ENCODE measurements at regions of chr14 and their contacts with region 1.

Region 1: DNA sequence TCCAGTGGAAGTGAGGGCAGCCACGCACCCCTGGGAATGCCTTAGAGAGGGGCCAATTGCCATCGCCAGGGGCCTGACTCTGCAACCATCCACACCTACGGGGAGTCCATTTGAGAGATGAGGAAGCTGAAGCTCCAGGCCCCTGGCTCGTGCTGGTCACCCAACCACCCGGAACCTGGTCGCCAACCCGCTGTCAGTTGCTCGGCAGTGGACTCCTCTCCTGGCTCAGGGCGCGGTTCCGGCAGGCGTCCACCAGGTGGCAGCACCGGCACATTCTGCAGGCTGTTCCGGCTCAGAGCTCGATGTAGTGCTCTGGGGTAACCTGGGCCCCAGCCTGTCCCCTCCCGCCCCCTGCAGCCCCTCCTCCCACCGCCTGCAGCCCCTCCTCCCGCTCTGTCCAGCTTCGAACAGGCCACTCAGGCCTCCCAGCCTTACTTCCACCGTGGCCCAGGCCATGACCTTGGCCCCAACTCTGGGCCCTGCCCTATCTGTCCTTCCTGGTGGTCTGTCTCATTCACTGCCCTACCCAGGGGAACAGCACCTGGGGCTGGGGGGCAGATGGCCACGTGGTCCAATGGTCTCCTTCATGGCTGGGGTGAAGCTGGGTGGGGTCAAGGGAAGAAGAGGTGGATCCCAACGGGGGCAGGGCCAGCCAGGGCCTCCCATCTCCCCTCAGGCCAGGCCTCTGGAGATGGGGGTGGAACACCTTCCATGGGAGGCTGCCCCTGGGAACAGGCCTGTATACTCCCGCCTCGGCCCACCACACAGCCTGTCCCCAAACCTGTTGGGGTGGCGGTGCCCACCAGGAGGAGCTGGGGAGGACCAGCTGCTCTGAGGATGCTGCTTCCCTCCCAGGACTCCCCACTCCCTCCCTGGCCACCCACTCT is 15.7 kb downstream of the SIVA1 start:
- DNase-seq: peak; percentile 86
- H3K4me3 Mint-ChIP-seq: no peak overlapping the region
- H3K27ac Mint-ChIP-seq: no peak overlapping the region
- H3K4me1 Mint-ChIP-seq: no peaks in the 10 kb centered on the region
- H3K27me3 Mint-ChIP-seq: no peaks in the 10 kb centered on the region

Region 2: DNA sequence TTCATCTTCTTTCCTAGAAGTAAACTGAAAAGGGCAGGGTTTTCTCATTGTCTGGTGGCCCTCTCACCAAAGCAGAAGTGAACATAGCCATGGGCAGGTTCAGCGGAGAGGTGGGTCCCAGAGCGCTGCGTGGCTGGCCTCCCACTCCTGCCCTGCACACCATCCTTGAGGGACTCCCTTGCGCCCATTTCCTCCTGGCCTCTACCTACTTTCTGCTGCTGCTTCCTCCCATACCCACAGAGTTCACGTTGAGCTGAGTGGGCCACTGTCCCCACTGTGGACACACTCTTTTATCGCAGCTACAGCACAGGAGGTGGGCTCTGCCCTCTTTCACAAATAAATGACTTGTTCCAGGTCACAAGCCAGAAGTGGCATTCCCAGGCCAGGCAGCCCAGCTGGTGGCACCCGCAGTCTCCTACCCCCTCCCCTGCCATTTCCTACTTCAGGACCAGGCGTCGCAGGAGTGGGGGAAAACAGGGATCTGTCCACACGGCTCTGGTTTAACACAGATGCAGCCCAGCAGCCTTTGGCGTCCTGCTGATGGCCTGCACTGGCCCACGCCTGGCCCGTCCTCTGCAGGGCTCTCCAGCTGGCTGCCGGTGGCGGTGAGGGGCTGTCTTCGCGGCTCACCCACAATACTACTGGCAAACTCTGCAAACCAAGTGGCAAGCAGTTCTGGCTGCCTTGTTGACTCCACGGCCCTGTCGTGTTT is 10.8 kb before region 1 on chr14:
- intact Hi-C with region 1: no loop called
- DNase-seq: no peak
- H3K4me3 Mint-ChIP-seq: no peak overlapping the region
- H3K27ac Mint-ChIP-seq: no peak overlapping the region
- H3K4me1 Mint-ChIP-seq: peaks cover 21% of the 10 kb centered on the region
- H3K27me3 Mint-ChIP-seq: no peaks in the 10 kb centered on the region

Region 3: GRCh38 chr14:104800015-104800770 is 31.5 kb after region 1 on chr14:
- intact Hi-C with region 1: loop called (anchors 1 kb)
- DNase-seq: peak; percentile 77
- H3K4me3 Mint-ChIP-seq: peak overlapping the region; percentile 61
- H3K27ac Mint-ChIP-seq: peak overlapping the region; percentile 66
- H3K4me1 Mint-ChIP-seq: peaks cover 16% of the 10 kb centered on the region
- H3K27me3 Mint-ChIP-seq: peaks cover 10% of the 10 kb centered on the region

Region 4: GRCh38 chr14:104865644-104866441 is 97.2 kb after region 1 on chr14:
- intact Hi-C with region 1: loop called (anchors 5 kb)
- DNase-seq: no peak
- H3K4me3 Mint-ChIP-seq: peak overlapping the region; percentile 70
- H3K27ac Mint-ChIP-seq: no peak overlapping the region
- H3K4me1 Mint-ChIP-seq: peaks cover 7% of the 10 kb centered on the region
- H3K27me3 Mint-ChIP-seq: peaks cover 12% of the 10 kb centered on the region

Region 5: DNA sequence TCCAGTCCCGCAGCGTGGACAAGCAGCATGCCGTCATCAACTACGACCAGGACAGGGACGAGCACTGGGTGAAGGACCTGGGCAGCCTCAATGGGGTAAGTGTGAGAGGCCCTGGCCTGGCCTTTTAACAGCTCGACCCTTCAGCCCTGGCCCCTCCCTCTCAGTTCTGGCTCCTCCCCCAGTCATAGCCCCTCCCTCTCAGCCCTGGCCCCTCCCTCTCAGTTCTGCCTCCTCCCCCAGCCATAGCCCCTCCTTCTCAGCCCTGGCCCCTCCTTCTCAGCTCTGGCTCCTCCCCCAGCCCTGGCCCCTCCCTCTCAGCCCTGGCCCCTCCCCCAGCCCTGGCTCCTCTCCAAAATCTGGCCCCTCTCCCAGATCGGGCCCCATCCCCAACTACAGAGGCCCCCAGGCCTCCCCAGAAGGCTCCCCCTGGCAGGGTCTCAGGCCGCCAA is 107.6 kb after region 1 on chr14:
- intact Hi-C with region 1: loop called (anchors 1 kb)
- DNase-seq: peak; percentile 21
- H3K4me3 Mint-ChIP-seq: no peak overlapping the region
- H3K27ac Mint-ChIP-seq: no peak overlapping the region
- H3K4me1 Mint-ChIP-seq: peaks cover 7% of the 10 kb centered on the region
- H3K27me3 Mint-ChIP-seq: no peaks in the 10 kb centered on the region

Region 6: GRCh38 chr14:104957146-104958113 is 188.8 kb after region 1 on chr14:
- intact Hi-C with region 1: no loop called
- DNase-seq: no peak
- H3K4me3 Mint-ChIP-seq: no peak overlapping the region
- H3K27ac Mint-ChIP-seq: no peak overlapping the region
- H3K4me1 Mint-ChIP-seq: no peaks in the 10 kb centered on the region
- H3K27me3 Mint-ChIP-seq: peaks cover 7% of the 10 kb centered on the region